ENCODE measurements at regions of chr2 and their contacts with region 1.

Region 1: DNA sequence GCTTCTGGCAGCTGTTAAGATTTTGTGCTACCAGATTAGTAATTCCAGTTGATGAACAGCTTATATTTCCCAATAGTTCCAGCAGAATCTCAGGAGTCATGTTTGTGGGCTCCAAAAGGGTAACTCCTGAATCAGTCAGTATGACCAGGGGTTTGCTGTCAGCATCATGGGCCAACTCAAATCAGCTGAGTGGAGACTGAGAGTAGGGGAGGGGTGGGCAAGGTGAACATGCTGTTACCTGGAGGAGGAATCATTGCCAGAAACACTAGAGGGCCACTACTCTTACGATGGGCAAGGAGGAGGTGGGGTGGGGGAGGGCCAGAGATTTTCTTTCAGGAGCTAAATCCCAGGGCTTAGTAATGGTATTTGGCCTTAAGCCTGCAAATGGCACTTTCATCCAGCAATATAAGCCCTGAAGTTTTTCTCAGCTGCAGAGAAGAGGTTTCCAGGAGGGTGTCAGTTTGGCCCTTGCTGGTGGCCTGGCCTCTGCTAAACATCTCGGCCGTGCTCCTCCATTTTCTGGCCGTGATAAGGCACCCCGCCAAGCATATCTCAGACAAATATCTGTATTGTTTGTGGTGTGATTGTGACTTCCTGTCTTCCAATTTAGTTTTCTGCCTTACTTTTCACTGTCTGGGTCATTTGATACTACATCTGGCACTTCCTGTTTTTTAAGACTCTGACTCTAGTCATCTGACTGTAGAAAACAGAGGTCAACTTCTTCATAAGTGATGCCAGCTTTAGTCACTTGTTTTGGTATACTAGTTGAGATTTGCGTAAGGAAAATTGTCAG is 120.5 kb upstream of the CXCR4 start:
- DNase-seq: peak; percentile 46
- ATAC-seq: peak; percentile 69
- H3K4me3 Mint-ChIP-seq: peak overlapping the region; percentile 0
- H3K27ac Mint-ChIP-seq: peak overlapping the region; percentile 77
- H3K4me1 Mint-ChIP-seq: peaks cover 61% of the 10 kb centered on the region
- H3K27me3 Mint-ChIP-seq: no peaks in the 10 kb centered on the region

Region 2: DNA sequence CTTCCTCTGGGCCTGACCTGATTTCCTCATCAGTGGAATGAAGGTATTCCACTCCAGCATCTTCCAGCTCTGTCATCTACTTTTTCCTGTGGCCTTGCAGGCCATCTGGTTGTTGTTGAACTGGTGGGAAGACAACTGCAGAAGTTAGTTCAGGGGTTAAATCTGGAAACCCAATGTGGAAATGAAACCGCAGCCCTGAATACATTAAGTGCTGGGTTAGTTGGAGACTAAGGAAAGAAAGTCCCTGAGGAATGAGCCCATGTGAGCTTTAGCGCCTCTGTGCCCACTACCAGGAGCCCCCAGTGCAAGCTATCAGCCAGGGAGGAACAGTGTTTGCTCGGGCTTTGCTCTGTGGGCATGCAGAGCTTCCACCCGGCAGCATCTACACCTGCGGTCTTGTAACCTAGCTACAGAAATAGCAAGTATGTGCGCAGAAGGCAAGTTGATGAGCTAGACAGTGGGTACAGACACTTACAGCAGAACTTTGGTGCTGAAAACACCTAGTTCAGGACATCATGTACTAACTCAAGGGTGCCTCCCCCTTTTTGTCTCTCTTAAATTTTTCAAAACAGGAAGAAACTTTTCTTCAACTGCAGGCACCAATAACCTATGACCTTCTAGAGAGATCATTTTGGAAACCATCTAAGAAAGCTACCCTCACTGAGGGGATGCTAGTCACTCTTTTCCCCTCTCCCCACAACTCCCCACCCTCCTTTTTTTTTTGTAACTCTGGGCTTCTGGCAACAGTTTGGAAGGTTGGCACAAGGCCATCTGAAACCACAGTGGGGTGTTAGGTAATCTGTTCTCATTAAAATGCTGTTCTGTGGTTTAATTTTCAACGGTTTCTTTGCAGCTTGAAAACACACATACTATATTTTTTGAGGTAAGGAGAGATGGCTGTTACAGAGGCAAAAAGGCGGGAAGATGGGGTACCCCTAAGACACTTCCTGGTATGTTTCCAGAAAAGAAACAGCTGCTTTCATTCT is 102.3 kb before region 1 on chr2:
- CTCF ChIA-PET with region 1: interaction called, 12 read pairs
- POLR2A ChIA-PET with region 1: interaction called, 11 read pairs
- DNase-seq: peak; percentile 86
- ATAC-seq: peak; percentile 71
- H3K4me3 Mint-ChIP-seq: peak overlapping the region; percentile 44
- H3K27ac Mint-ChIP-seq: peak overlapping the region; percentile 95
- H3K4me1 Mint-ChIP-seq: peaks cover 91% of the 10 kb centered on the region
- H3K27me3 Mint-ChIP-seq: peaks cover 11% of the 10 kb centered on the region

Region 3: DNA sequence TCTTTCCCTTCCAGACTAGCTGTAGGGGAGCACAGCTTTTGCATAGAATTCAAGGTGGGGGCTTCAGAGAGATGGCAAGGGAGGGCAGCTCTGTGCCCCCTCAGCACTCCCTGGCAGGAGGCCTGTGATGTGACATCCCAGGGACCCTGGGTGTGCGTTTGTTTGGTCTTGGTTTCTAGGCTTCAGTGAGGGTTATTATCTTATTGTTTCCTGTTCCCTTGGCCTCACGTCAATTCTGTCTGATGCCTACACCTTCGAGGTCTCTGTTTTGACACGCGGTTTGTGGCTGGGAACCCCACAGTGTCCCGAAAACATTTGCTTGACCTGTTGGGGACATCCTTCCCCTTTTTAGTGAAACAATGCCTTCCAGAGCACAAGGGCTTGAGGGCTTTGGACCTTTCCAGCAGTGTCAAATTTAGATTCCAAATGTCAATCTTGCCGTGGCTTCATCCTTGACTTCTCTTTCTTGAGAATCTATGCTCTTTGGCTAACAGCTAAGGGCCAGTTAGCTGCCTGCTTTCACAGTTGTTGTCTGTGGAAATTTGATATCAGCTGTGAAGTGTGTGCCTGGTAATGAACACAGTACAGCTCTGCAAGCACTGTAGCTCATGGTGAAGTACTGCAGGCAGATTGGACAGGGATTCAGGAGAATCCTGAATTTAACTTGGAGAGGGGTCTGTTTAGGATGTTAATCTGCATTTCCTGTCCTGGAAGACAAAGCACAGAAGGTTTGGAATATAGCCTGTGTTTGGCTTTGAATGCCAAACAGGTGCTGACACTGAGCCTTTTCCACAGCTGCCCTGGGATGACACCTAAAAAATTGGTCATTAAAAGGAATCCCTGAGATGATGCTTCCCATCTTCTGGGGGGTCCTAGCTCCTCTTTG is 12.3 kb before region 1 on chr2:
- CTCF ChIA-PET with region 1: interaction called, 16 read pairs
- POLR2A ChIA-PET with region 1: no interaction called
- DNase-seq: peak; percentile 32
- ATAC-seq: peak; percentile 75
- H3K4me3 Mint-ChIP-seq: no peak overlapping the region
- H3K27ac Mint-ChIP-seq: peak overlapping the region; percentile 35
- H3K4me1 Mint-ChIP-seq: peaks cover 13% of the 10 kb centered on the region
- H3K27me3 Mint-ChIP-seq: peaks cover 22% of the 10 kb centered on the region

Region 4: DNA sequence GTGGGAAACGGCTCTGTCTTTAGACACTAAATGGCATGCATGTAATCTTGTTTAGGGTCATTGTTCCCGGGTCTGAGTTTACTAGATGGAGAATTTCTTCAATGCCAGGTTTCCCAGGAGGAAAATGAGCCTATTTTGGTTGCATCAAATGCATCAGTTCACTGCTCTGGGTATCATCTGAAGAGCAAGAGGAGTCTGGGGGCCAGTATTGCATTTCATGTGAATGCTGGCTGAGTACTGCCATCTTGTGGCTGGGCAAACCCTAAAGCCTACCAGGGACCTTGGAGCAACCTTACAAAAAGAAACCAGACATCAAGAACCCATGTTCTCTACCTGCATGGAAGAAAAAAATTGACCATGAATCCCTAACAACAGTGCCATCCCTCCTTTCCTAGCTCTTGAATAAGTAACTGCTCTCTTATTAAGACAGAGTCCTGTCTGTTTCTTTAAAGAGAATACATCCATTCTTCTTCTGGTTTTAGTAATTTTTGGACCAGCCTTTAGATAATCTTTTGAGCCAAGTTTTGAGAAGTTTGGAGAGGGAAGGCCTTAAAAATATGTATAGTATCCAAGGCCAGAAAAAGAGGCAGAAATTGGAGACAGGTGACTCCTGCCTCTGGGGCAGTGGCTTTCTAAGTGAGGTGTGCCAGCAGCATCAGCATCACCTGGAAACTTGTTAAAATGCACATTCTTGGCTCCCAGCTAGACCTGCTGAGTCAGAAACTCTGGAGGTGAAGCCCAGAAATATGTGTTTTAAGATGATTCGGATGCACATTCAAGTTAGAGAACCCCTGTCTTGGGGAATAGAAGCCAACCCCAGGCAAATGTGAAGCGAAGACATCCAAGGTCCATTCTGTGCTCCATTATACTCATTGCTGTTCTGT is 140.5 kb after region 1 on chr2:
- CTCF ChIA-PET with region 1: interaction called, 17 read pairs
- POLR2A ChIA-PET with region 1: interaction called, 4 read pairs
- DNase-seq: peak; percentile 87
- ATAC-seq: peak; percentile 50
- H3K4me3 Mint-ChIP-seq: no peak overlapping the region
- H3K27ac Mint-ChIP-seq: no peak overlapping the region
- H3K4me1 Mint-ChIP-seq: peaks cover 82% of the 10 kb centered on the region
- H3K27me3 Mint-ChIP-seq: no peaks in the 10 kb centered on the region